Body of pancreas (tissue), 4 donors: ENCODE measurements at regions of chr5 and their contacts with region 1.

Region 1: GRCh38 chr5:172479044-172479783 is 24.9 kb upstream of the SH3PXD2B start:
- DNase-seq: peak; percentile 88 to 90 (median 88)
- ATAC-seq: peak; percentile 98
- H3K4me3 ChIP-seq: no peak overlapping the region
- H3K27ac ChIP-seq: no peak overlapping the region
- H3K4me1 ChIP-seq: no peaks in the 10 kb centered on the region
- H3K27me3 ChIP-seq: no peaks in the 10 kb centered on the region
- CTCF ChIP-seq: peak; percentile 74 to 99 (median 99)
- POLR2A ChIP-seq: no peak

Region 2: GRCh38 chr5:172035039-172035438 is 444.2 kb before region 1 on chr5:
- intact Hi-C with region 1: no loop called
- DNase-seq: no peak
- ATAC-seq: no peak
- H3K4me3 ChIP-seq: no peak overlapping the region
- H3K27ac ChIP-seq: no peak overlapping the region
- H3K4me1 ChIP-seq: peaks cover 2% of the 10 kb centered on the region
- H3K27me3 ChIP-seq: no peaks in the 10 kb centered on the region
- CTCF ChIP-seq: no peak
- POLR2A ChIP-seq: no peak

Region 3: DNA sequence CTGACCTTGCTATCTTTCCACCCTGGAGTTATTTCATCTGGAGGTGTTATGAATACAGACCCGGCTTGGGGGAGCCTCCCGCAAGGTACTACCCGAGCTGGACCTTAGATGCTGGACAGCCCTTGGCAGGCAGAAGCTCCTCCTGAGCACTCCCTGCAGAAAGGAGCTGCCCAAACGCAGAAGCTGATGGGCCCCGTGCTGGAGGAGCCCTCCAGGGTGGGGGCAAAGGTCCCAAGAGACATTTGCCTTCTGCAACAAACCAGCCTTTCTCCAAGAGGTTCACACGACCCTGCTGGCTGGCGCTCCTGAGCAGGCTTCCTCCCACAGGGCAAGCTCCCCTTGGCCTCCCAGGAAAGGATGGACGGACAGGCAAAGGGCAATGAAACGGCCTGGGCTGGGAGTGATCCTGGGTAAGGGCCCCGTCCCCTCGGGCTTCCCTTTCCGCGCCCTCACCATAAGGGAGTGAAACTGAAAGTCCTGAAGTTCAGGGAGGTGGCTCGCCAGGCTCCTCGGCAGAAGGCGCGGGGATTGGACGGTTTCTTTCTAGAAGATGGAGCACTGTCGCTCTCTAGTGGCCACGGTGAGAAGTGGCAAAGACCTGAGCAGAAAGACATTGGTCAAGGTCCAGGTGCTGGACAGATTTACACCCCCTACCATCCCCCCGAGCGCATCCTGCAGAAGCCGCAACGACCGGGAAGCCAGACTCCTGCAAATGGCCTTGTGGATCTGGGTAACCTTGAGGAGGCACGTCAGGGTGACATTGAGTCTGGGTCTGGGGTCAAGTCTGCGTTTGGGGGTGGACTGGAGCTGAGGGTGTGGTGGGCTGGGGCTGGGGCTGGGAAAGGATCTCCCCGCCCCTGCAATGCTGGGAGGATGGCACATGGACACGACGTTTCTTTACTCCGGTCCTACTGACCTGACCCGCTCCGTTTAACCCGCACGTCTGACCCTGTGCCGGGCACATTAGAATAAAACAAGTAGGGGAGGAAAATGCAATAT is 218.2 kb after region 1 on chr5:
- intact Hi-C with region 1: loop called (anchors 2 kb)
- DNase-seq: peak; percentile 90 to 95 (median 94)
- ATAC-seq: peak; percentile 93
- H3K4me3 ChIP-seq: peak overlapping the region; percentile 13 to 24
- H3K27ac ChIP-seq: peak overlapping the region in 3 of 4 donors; percentile 56 to 61 (median 59)
- H3K4me1 ChIP-seq: peaks cover 11% of the 10 kb centered on the region
- H3K27me3 ChIP-seq: no peaks in the 10 kb centered on the region
- CTCF ChIP-seq: peak; percentile 79 to 98 (median 96)
- POLR2A ChIP-seq: peak; percentile 28 to 73 (median 59)

Region 4: DNA sequence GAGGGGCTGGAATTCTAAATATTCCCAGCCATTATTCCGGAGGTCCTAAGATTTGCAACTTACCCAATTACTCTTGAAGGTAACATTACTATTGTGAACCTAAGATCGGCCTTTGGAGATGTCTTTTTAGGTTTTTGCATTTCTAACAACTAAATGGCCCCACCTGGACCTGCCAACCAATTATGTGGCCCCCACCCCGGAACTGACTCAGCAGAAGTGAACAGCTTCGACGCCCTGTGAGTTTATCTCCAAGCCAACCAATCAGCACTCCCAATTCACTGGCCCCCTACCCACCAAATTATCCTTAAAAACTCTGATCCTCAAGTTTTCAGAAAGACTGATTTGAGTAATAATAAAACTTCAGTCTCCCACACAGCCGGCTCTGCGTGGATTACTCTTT is 224.7 kb after region 1 on chr5:
- intact Hi-C with region 1: loop called (anchors 2 kb)
- DNase-seq: no peak
- ATAC-seq: no peak
- H3K4me3 ChIP-seq: no peak overlapping the region
- H3K27ac ChIP-seq: no peak overlapping the region
- H3K4me1 ChIP-seq: no peaks in the 10 kb centered on the region
- H3K27me3 ChIP-seq: no peaks in the 10 kb centered on the region
- CTCF ChIP-seq: no peak
- POLR2A ChIP-seq: no peak